Right cardiac atrium (tissue), 5 donors: ENCODE measurements at regions of chr4 and their contacts with region 1.

Region 1: GRCh38 chr4:121096629-121097028 is 24.3 kb upstream of the NDNF start:
- DNase-seq: no peak
- ATAC-seq: no peak
- H3K4me3 ChIP-seq: no peak overlapping the region
- H3K27ac ChIP-seq: no peak overlapping the region
- H3K4me1 ChIP-seq: no peaks in the 10 kb centered on the region
- H3K27me3 ChIP-seq: no peaks in the 10 kb centered on the region

Region 2: GRCh38 chr4:120071192-120071795 is 1025.3 kb before region 1 on chr4:
- intact Hi-C with region 1: loop called in 2 of 4 experiments (anchors 10 kb)
- DNase-seq: no peak
- ATAC-seq: no peak
- H3K4me3 ChIP-seq: no peak overlapping the region
- H3K27ac ChIP-seq: no peak overlapping the region
- H3K4me1 ChIP-seq: peaks cover 4% of the 10 kb centered on the region
- H3K27me3 ChIP-seq: no peaks in the 10 kb centered on the region

Region 3: GRCh38 chr4:120156120-120156718 is 940.4 kb before region 1 on chr4:
- intact Hi-C with region 1: loop called (anchors 5 to 10 kb)
- DNase-seq: no peak
- ATAC-seq: no peak
- H3K4me3 ChIP-seq: no peak overlapping the region
- H3K27ac ChIP-seq: no peak overlapping the region
- H3K4me1 ChIP-seq: no peaks in the 10 kb centered on the region
- H3K27me3 ChIP-seq: no peaks in the 10 kb centered on the region

Region 4: GRCh38 chr4:120718979-120719566 is 377.6 kb before region 1 on chr4:
- intact Hi-C with region 1: loop called in 1 of 4 experiments (anchors 10 kb)
- DNase-seq: peak in 2 of 3 donors; percentile 30 to 39
- ATAC-seq: peak; percentile 86 to 88
- H3K4me3 ChIP-seq: no peak overlapping the region
- H3K27ac ChIP-seq: no peak overlapping the region
- H3K4me1 ChIP-seq: no peaks in the 10 kb centered on the region
- H3K27me3 ChIP-seq: no peaks in the 10 kb centered on the region

Region 5: GRCh38 chr4:121016630-121017029 is 80.0 kb before region 1 on chr4:
- intact Hi-C with region 1: loop called in 1 of 4 experiments (anchors 5 kb)
- DNase-seq: no peak
- ATAC-seq: no peak
- H3K4me3 ChIP-seq: no peak overlapping the region
- H3K27ac ChIP-seq: no peak overlapping the region
- H3K4me1 ChIP-seq: no peaks in the 10 kb centered on the region
- H3K27me3 ChIP-seq: no peaks in the 10 kb centered on the region